IMR-90 (cell line): ENCODE measurements at regions of chr7 and their contacts with region 1.

Region 1: GRCh38 chr7:94223375-94224070 is 171.2 kb upstream of the COL1A2 start:
- DNase-seq: peak; percentile 69
- ATAC-seq: peak; percentile 97
- H3K4me3 ChIP-seq: no peak overlapping the region
- H3K27ac ChIP-seq: no peak overlapping the region
- H3K4me1 ChIP-seq: peaks cover 5% of the 10 kb centered on the region
- H3K27me3 ChIP-seq: no peaks in the 10 kb centered on the region
- CTCF ChIP-seq: peak; percentile 86
- POLR2A ChIP-seq: 0 out of 2 replicates have a peak, but pooled peaks have one; percentile 39
- RAD21 ChIP-seq: peak; percentile 92

Region 2: GRCh38 chr7:93178212-93178611 is 1045.3 kb before region 1 on chr7:
- CTCF ChIA-PET with region 1: no interaction called
- POLR2A ChIA-PET with region 1: no interaction called
- dilution Hi-C with region 1: no loop called
- in situ Hi-C with region 1: no loop called
- intact Hi-C with region 1: loop called (anchors 10 kb)
- DNase-seq: peak; percentile 23
- ATAC-seq: peak; percentile 37; the same call in 1 of the 2 replicates
- H3K4me3 ChIP-seq: no peak overlapping the region
- H3K27ac ChIP-seq: no peak overlapping the region
- H3K4me1 ChIP-seq: no peaks in the 10 kb centered on the region
- H3K27me3 ChIP-seq: peaks cover 17% of the 10 kb centered on the region
- CTCF ChIP-seq: peak; percentile 41
- POLR2A ChIP-seq: no peak
- RAD21 ChIP-seq: peak; percentile 49

Region 3: DNA sequence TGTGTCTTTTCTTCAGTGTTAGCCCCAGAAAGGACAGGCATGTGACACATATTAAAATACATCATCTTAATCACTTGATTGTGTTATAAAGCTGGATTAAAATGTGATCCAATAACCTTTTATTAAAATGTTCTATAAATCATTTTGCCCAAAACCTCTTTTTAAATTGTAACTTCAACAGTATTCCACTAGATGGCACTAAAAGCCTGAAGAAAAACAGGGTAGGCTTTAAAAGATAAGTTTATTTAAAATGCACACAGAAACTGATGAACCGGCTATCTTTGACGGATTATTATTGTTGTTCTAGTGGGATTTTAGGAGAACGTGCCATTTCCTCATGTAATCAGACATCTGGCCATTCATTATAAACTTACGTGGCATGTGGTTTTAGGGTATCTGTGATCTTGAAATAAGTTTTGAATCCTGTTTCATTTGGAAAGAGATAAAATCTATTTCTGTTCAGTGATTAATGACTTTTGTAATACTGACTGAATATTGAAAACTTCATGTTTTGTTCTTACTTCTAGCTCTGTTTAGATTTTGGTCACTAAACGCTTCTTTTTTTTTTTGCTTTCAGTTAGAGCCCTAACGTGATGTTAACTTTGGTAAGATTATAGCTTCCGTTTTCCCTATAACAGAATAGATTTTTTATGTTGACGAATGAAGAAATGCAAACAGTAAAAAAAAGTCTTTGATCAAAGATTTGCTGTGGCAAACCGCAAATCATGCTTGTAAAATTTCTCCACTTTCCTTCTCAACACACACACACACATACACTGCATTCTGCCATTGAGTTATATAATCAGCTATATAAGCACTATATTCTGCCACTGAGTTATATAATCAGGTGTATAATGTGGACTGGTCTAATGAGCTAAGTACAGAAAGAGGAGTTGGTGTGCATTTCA is 977.7 kb before region 1 on chr7:
- CTCF ChIA-PET with region 1: no interaction called
- POLR2A ChIA-PET with region 1: no interaction called
- dilution Hi-C with region 1: no loop called
- in situ Hi-C with region 1: loop called (anchors 25 kb)
- intact Hi-C with region 1: loop called (anchors 5 kb)
- DNase-seq: peak; percentile 38
- ATAC-seq: peak; percentile 51; the same call in 1 of the 2 replicates
- H3K4me3 ChIP-seq: no peak overlapping the region
- H3K27ac ChIP-seq: no peak overlapping the region
- H3K4me1 ChIP-seq: no peaks in the 10 kb centered on the region
- H3K27me3 ChIP-seq: no peaks in the 10 kb centered on the region
- CTCF ChIP-seq: peak; percentile 71
- POLR2A ChIP-seq: no peak
- RAD21 ChIP-seq: peak; percentile 77

Region 4: DNA sequence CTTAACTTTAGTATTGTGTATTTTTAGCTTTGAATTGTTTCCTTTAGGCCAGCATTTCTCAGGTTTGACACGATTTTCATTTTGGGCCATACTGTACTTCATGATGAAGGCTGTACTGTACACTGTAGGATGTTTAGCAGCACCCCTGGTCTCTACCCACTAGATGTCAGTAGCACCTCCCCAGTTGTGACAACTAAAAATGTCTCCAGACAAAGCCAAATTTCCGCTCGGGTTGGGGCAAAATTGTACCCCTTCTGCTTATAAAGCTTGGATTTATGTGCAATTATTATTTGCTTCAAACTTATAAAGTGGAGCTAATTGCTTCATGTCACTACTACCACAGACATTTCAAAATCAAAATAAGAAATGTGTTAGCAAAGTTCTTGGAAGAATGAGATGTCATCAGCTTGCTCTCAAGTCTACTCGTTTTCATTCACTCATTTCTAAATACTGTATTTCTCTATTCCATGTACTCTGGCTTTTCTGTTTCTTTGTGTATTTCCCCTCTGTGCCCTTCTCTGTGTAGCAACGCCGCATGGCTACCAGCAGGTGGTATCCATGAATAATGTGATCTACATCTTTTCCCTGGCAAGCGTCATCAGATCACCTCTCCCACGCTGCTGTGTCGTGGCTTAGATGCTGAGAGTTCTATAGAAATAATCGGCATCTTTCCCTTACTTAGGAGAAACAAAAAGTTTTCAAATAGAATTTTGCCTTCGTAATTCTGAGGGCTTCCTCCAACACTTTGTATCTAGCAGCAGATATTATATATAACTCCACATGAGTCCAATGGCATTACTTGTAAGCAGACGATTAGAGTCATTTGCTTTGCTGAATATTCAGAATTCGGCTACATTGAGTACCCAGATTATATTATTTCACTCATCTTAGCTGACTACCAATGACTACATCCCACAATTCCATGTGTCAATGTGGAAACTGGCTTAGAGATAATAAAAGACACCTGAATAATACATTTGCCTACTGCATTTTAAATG is 601.2 kb before region 1 on chr7:
- CTCF ChIA-PET with region 1: interaction called, 4 read pairs
- POLR2A ChIA-PET with region 1: no interaction called
- dilution Hi-C with region 1: no loop called
- in situ Hi-C with region 1: no loop called
- intact Hi-C with region 1: loop called (anchors 5 kb)
- DNase-seq: peak; percentile 8
- ATAC-seq: peak; percentile 68
- H3K4me3 ChIP-seq: no peak overlapping the region
- H3K27ac ChIP-seq: no peak overlapping the region
- H3K4me1 ChIP-seq: no peaks in the 10 kb centered on the region
- H3K27me3 ChIP-seq: no peaks in the 10 kb centered on the region
- CTCF ChIP-seq: peak; percentile 27; the same call in 1 of the 2 replicates
- POLR2A ChIP-seq: no peak
- RAD21 ChIP-seq: no peak

Region 5: DNA sequence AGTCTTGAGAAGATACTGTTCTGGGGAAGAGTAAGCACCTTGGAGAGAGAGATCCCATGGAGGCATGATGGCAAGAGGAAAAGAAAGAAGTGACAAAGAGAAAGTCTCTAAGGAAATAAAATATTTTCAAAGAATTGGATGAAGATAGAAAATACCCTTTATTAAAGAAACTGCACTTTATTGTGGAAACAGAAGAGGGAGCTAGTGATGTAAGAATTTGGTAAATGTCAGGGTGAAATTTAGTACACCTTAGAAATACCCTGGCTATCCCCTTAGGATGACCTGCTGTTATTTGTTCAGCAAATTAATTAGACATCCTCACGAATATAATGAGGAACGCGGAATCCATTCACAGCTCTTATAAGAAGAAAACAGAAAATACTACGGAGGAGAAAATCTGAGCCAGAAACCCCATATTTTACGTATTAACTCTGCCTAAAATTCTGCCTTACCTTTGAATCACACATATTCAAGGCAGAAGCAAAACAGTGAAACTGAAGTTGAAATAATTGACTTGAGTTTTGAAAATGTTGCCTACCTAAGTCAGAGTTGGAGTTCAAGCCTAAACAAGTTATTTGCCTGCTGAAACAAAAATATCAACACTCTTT is 423.7 kb before region 1 on chr7:
- CTCF ChIA-PET with region 1: interaction called, 8 read pairs
- POLR2A ChIA-PET with region 1: no interaction called
- dilution Hi-C with region 1: no loop called
- in situ Hi-C with region 1: loop called (anchors 5 kb)
- intact Hi-C with region 1: loop called (anchors 1 kb)
- DNase-seq: peak; percentile 23
- ATAC-seq: no peak
- H3K4me3 ChIP-seq: no peak overlapping the region
- H3K27ac ChIP-seq: no peak overlapping the region
- H3K4me1 ChIP-seq: no peaks in the 10 kb centered on the region
- H3K27me3 ChIP-seq: no peaks in the 10 kb centered on the region
- CTCF ChIP-seq: peak; percentile 67
- POLR2A ChIP-seq: no peak
- RAD21 ChIP-seq: peak; percentile 63

Region 6: DNA sequence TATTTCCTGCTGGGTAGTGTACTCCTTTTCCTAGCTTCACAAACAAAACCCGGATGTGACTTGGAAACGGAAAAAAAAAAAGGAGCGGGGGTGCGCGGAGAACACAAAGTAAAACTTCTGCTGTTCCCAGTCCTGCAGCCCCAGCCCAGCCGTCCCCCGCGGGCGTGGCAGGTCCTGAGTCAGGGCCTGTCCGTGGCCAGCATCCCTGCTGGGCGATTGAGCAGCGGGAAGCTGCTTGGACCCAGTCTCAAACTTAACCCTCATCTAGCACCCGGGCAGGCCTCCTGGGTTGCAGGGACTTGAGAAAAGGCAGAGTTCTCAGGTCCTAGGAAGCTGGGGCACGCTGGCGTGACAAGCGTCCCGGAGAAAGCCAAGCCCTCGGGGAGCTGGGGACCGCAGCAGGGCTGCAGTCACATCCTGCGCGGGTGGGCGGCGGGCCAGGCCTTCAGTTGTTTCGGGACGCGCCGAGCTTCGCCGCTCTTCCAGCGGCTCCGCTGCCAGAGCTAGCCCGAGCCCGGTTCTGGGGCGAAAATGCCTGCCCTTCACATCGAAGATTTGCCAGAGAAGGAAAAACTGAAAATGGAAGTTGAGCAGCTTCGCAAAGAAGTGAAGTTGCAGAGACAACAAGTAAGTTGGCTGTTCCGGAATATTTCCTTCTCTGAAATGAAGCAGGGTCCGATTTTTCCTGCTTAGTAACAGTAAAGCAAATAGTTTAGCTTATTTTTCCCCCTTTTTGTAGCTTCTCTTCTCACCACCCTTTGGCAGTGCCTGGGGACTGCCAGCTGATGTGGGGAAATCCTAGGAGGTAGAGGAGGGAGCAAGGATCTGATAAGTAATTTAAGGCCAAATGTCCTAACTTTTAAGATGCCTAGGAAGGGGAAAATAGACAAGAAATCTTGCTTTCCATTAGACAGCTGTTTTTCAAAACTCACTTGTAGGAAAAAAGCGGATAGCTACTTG is 301.6 kb before region 1 on chr7 and contains the start of gene GNG11:
- CTCF ChIA-PET with region 1: interaction called, 8 read pairs
- POLR2A ChIA-PET with region 1: no interaction called
- dilution Hi-C with region 1: no loop called
- in situ Hi-C with region 1: no loop called
- intact Hi-C with region 1: loop called (anchors 5 kb)
- DNase-seq: peak; percentile 66
- ATAC-seq: peak; percentile 84
- H3K4me3 ChIP-seq: peak within 1 kb of the TSS; percentile 99
- H3K27ac ChIP-seq: peak within 1 kb of the TSS; percentile 80
- H3K4me1 ChIP-seq: peaks cover 7% of the 10 kb centered on the region
- H3K27me3 ChIP-seq: no peaks in the 10 kb centered on the region
- CTCF ChIP-seq: no peak
- POLR2A ChIP-seq: 0 out of 2 replicates have a peak, but pooled peaks have one; percentile 34
- RAD21 ChIP-seq: no peak
- total RNA-seq, gene GNG11: 6.1 and 11.1 TPM in 2 replicates

Region 7: DNA sequence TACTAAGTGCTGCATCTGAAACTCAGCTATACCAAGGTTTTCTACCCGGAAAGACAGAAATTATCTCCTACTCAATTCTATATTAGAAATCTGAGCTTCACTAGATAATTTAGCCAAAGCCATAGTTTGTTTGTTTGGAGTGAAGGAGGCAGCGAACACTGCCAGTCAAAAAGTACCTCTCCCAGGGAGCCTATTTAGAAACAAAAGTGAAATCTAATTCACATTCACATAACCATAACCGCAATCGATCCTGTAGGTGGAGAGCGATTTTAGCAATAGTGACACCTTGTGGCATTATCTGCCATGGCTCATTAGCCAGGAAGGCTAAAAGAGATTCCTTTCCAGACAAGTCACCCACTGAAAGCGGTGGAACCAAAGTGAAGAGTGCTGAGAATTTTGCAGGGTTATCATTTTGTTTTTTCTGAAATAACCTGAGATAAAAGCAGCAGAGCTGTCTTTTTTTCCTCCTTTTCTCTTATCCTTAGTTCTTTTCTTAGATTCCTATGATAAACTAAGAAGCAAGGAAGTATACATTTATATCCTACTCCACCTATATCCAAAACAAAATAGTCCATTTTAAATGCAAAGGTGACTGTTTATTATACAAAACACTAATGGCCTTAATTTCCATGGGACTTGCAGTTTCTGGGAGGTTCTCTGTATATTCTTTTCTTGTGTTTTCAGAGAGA is 135.7 kb before region 1 on chr7:
- CTCF ChIA-PET with region 1: no interaction called
- POLR2A ChIA-PET with region 1: no interaction called
- dilution Hi-C with region 1: no loop called
- in situ Hi-C with region 1: no loop called
- intact Hi-C with region 1: loop called (anchors 1 kb)
- DNase-seq: peak; percentile 85
- ATAC-seq: peak; percentile 87
- H3K4me3 ChIP-seq: peak overlapping the region; percentile 15; the same call in 1 of the 2 replicates
- H3K27ac ChIP-seq: no peak overlapping the region
- H3K4me1 ChIP-seq: peaks cover 9% of the 10 kb centered on the region
- H3K27me3 ChIP-seq: no peaks in the 10 kb centered on the region
- CTCF ChIP-seq: peak; percentile 78
- POLR2A ChIP-seq: no peak
- RAD21 ChIP-seq: peak; percentile 84